Heart right ventricle (tissue), 16 donors: ENCODE measurements at regions of chrX and their contacts with region 1.

Region 1: GRCh38 chrX:34656842-34657725 is at the start of gene TMEM47:
- DNase-seq: peak; percentile 73 to 78
- ATAC-seq: peak; percentile 94 to 99 (median 97)
- H3K4me3 ChIP-seq: peak within 1 kb of the TSS; percentile 32 to 76 (median 67)
- H3K27ac ChIP-seq: peak within 1 kb of the TSS; percentile 64 to 90 (median 85)
- H3K4me1 ChIP-seq: peaks cover 0 to 20% (median 2%) of the 10 kb centered on the region in 9 donors
- H3K27me3 ChIP-seq: peaks cover 0 to 48% (median 0%) of the 10 kb centered on the region in 7 donors
- CTCF ChIP-seq: no peak
- total RNA-seq, gene TMEM47: 27.7 to 38.7 (median 32.2) TPM

Region 2: GRCh38 chrX:34503119-34503518 is 154.0 kb before region 1 on chrX:
- intact Hi-C with region 1: no loop called
- DNase-seq: no peak
- ATAC-seq: no peak
- H3K4me3 ChIP-seq: no peak overlapping the region
- H3K27ac ChIP-seq: no peak overlapping the region
- H3K4me1 ChIP-seq: no peaks in the 10 kb centered on the region
- H3K27me3 ChIP-seq: no peaks in the 10 kb centered on the region
- CTCF ChIP-seq: no peak

Region 3: GRCh38 chrX:34585561-34585960 is 71.5 kb before region 1 on chrX:
- intact Hi-C with region 1: loop called in 3 of 10 experiments (anchors 10 kb)
- DNase-seq: no peak
- ATAC-seq: no peak
- H3K4me3 ChIP-seq: peak overlapping the region in 1 of 10 donors; percentile 33
- H3K27ac ChIP-seq: peak overlapping the region in 1 of 10 donors; percentile 28
- H3K4me1 ChIP-seq: peaks cover 0 to 2% (median 0%) of the 10 kb centered on the region in 9 donors
- H3K27me3 ChIP-seq: no peaks in the 10 kb centered on the region
- CTCF ChIP-seq: no peak

Region 4: GRCh38 chrX:34598360-34598759 is 58.7 kb before region 1 on chrX:
- intact Hi-C with region 1: loop called in 1 of 10 experiments (anchors 10 kb)
- DNase-seq: no peak
- ATAC-seq: no peak
- H3K4me3 ChIP-seq: no peak overlapping the region
- H3K27ac ChIP-seq: no peak overlapping the region
- H3K4me1 ChIP-seq: no peaks in the 10 kb centered on the region
- H3K27me3 ChIP-seq: no peaks in the 10 kb centered on the region
- CTCF ChIP-seq: no peak

Region 5: GRCh38 chrX:34631821-34632220 is 25.3 kb before region 1 on chrX:
- intact Hi-C with region 1: loop called in 1 of 10 experiments (anchors 2 kb)
- DNase-seq: no peak
- ATAC-seq: peak in 4 of 8 donors; percentile 33 to 84 (median 54)
- H3K4me3 ChIP-seq: no peak overlapping the region
- H3K27ac ChIP-seq: peak overlapping the region in 2 of 10 donors; percentile 23 to 58
- H3K4me1 ChIP-seq: peaks cover 0 to 35% (median 8%) of the 10 kb centered on the region in 9 donors
- H3K27me3 ChIP-seq: peaks cover 0 to 4% (median 0%) of the 10 kb centered on the region in 7 donors
- CTCF ChIP-seq: no peak